Endothelial cell of umbilical vein (primary cell): ENCODE measurements at regions of chr5 and their contacts with region 1.

Region 1: DNA sequence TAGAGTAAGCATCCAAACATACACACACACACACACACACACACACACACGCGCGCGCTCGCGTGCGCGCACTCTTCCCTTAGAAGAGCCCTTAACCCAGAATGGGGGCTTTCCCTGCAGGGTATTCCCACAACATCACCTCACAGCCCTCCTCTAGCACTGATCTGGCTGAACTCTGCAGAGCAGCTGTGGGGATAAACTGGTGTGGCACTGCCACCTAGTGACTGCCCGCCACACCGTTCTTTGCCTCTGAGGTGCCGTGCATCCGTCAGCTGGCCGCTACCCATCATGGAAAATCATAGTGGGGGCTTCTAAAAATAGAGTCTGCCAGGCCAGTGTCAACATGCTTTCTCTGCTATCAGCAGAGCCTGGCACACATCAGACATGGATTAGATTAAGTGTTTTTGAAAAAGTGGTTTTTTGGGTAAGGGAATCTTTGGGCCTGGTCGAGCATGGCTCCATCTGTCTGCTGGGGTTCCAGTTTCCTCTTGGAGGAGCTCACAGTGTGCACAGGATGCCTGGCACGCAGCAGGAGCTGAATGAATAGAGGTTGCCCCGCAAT is 88.1 kb downstream of the KCNN2 start:
- DNase-seq: peak; percentile 63
- H3K4me3 ChIP-seq: no peak overlapping the region
- H3K27ac ChIP-seq: no peak overlapping the region
- H3K4me1 ChIP-seq: no peaks in the 10 kb centered on the region
- H3K27me3 ChIP-seq: no peaks in the 10 kb centered on the region
- CTCF ChIP-seq: peak; percentile 81 to 85
- POLR2A ChIP-seq: no peak

Region 2: GRCh38 chr5:113612060-113612496 is 837.9 kb before region 1 on chr5:
- CTCF ChIA-PET with region 1: interaction called, 200 read pairs
- POLR2A ChIA-PET with region 1: no interaction called
- dilution Hi-C with region 1: no loop called
- intact Hi-C with region 1: loop called (anchors 1 kb)
- DNase-seq: peak; percentile 41
- H3K4me3 ChIP-seq: no peak overlapping the region
- H3K27ac ChIP-seq: no peak overlapping the region
- H3K4me1 ChIP-seq: peaks cover 7% of the 10 kb centered on the region
- H3K27me3 ChIP-seq: no peaks in the 10 kb centered on the region
- CTCF ChIP-seq: peak; percentile 20 to 35
- POLR2A ChIP-seq: no peak

Region 3: GRCh38 chr5:114101153-114101552 is 348.8 kb before region 1 on chr5:
- CTCF ChIA-PET with region 1: interaction called, 28 read pairs
- POLR2A ChIA-PET with region 1: no interaction called
- dilution Hi-C with region 1: no loop called
- intact Hi-C with region 1: loop called (anchors 1 kb)
- DNase-seq: peak; percentile 37
- H3K4me3 ChIP-seq: no peak overlapping the region
- H3K27ac ChIP-seq: no peak overlapping the region
- H3K4me1 ChIP-seq: no peaks in the 10 kb centered on the region
- H3K27me3 ChIP-seq: no peaks in the 10 kb centered on the region
- CTCF ChIP-seq: peak; percentile 42 to 45
- POLR2A ChIP-seq: no peak

Region 4: DNA sequence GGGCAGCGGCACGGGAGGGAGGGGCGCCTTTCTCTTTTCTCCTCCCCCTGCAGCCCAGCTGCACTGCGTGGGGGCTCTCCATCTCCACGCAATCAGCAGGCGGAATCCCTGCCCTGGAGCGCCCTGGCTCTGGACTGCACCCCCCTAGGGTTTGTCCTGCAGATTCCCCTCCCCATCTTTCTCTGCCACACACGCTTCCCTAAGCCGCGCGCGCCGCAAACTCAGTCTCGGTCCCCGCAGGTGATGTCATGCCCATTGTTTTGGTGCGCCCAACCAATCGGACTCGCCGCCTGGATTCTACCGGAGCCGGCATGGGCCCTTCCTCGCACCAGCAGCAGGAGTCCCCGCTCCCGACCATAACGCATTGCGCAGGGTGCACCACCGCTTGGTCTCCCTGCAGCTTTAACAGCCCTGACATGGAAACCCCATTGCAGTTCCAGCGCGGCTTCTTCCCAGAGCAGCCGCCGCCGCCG is 88.2 kb before region 1 on chr5 and contains the start of gene KCNN2:
- CTCF ChIA-PET with region 1: interaction called, 12 read pairs
- POLR2A ChIA-PET with region 1: no interaction called
- dilution Hi-C with region 1: no loop called
- intact Hi-C with region 1: loop called (anchors 2 kb)
- DNase-seq: peak; percentile 71
- H3K4me3 ChIP-seq: peak within 1 kb of the TSS; percentile 13 to 49 (median 28)
- H3K27ac ChIP-seq: no peak within 1 kb of the TSS
- H3K4me1 ChIP-seq: peaks cover 8% of the 10 kb centered on the region
- H3K27me3 ChIP-seq: peaks cover 37 to 66% of the 10 kb centered on the region in 2 experiments
- CTCF ChIP-seq: no peak
- POLR2A ChIP-seq: no peak
- total RNA-seq, gene KCNN2: 1.3 and 1.9 TPM in 2 replicates

Region 5: GRCh38 chr5:114467729-114468128 is 17.8 kb after region 1 on chr5:
- CTCF ChIA-PET with region 1: interaction called, 26 read pairs
- POLR2A ChIA-PET with region 1: no interaction called
- dilution Hi-C with region 1: no loop called
- intact Hi-C with region 1: no loop called
- DNase-seq: no peak
- H3K4me3 ChIP-seq: no peak overlapping the region
- H3K27ac ChIP-seq: no peak overlapping the region
- H3K4me1 ChIP-seq: no peaks in the 10 kb centered on the region
- H3K27me3 ChIP-seq: no peaks in the 10 kb centered on the region
- CTCF ChIP-seq: no peak
- POLR2A ChIP-seq: no peak